B cell (primary cell): ENCODE measurements at regions of chr2 and their contacts with region 1.

Region 1: GRCh38 chr2:177964892-177965291 is 107.7 kb downstream of the PDE11A start:
- DNase-seq: no peak
- ATAC-seq: no peak
- H3K4me3 ChIP-seq: no peak overlapping the region
- H3K4me3 Mint-ChIP-seq: no peak overlapping the region
- H3K27ac ChIP-seq: no peak overlapping the region
- H3K27ac Mint-ChIP-seq: no peak overlapping the region
- H3K4me1 ChIP-seq: no peaks in the 10 kb centered on the region
- H3K4me1 Mint-ChIP-seq: no peaks in the 10 kb centered on the region
- H3K27me3 ChIP-seq: no peaks in the 10 kb centered on the region
- H3K27me3 Mint-ChIP-seq: no peaks in the 10 kb centered on the region
- CTCF ChIP-seq: no peak

Region 2: GRCh38 chr2:177496921-177497320 is 468.0 kb before region 1 on chr2:
- CTCF ChIA-PET with region 1: no interaction called
- POLR2A ChIA-PET with region 1: interaction called, 13 read pairs
- intact Hi-C with region 1: no loop called
- DNase-seq: no peak
- ATAC-seq: no peak
- H3K4me3 ChIP-seq: no peak overlapping the region
- H3K4me3 Mint-ChIP-seq: no peak overlapping the region
- H3K27ac ChIP-seq: no peak overlapping the region
- H3K27ac Mint-ChIP-seq: no peak overlapping the region
- H3K4me1 ChIP-seq: no peaks in the 10 kb centered on the region
- H3K4me1 Mint-ChIP-seq: no peaks in the 10 kb centered on the region
- H3K27me3 ChIP-seq: no peaks in the 10 kb centered on the region
- H3K27me3 Mint-ChIP-seq: no peaks in the 10 kb centered on the region
- CTCF ChIP-seq: no peak

Region 3: DNA sequence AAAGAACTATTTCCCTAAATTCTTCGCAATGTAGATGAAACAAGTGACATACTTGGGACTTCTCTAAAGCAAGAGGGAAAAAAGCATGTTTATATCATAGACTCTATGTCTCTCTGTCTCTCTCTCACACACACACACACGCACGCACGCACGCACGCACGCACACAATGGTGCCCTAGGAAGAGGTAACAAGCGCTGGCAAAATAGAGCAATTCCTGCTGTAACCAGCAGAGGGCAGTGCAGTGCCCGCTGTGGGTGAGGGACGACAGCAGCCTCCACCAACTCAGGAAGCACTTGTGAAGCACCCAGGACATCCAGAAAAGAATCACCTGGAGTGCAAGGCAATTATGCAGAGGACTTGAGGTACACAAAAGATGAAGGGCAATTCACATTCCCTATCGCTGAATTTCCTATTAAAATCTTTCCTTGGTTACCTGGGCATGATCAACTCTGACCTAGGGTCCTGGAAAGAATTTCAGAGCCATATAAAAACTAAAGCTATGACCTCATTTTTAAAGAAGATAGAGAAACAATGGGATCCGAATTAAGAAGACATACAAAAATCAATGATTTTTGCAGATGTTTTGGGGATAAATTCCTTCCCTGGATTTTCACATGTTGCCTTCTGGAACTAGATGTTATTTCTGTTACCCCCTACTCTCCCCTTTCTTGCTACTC is 58.7 kb before region 1 on chr2:
- CTCF ChIA-PET with region 1: no interaction called
- POLR2A ChIA-PET with region 1: no interaction called
- intact Hi-C with region 1: no loop called
- DNase-seq: peak; percentile 41
- ATAC-seq: peak; percentile 53
- H3K4me3 ChIP-seq: no peak overlapping the region
- H3K4me3 Mint-ChIP-seq: no peak overlapping the region
- H3K27ac ChIP-seq: no peak overlapping the region
- H3K27ac Mint-ChIP-seq: no peak overlapping the region
- H3K4me1 ChIP-seq: no peaks in the 10 kb centered on the region
- H3K4me1 Mint-ChIP-seq: peaks cover 2% of the 10 kb centered on the region
- H3K27me3 ChIP-seq: no peaks in the 10 kb centered on the region
- H3K27me3 Mint-ChIP-seq: peaks cover 3% of the 10 kb centered on the region
- CTCF ChIP-seq: peak; percentile 70